ENCODE measurements at regions of chr11 and their contacts with region 1.

Region 1: GRCh38 chr11:36292311-36292722 is 3.1 kb upstream of the COMMD9 start:
- DNase-seq: no peak
- ATAC-seq: no peak

Region 2: DNA sequence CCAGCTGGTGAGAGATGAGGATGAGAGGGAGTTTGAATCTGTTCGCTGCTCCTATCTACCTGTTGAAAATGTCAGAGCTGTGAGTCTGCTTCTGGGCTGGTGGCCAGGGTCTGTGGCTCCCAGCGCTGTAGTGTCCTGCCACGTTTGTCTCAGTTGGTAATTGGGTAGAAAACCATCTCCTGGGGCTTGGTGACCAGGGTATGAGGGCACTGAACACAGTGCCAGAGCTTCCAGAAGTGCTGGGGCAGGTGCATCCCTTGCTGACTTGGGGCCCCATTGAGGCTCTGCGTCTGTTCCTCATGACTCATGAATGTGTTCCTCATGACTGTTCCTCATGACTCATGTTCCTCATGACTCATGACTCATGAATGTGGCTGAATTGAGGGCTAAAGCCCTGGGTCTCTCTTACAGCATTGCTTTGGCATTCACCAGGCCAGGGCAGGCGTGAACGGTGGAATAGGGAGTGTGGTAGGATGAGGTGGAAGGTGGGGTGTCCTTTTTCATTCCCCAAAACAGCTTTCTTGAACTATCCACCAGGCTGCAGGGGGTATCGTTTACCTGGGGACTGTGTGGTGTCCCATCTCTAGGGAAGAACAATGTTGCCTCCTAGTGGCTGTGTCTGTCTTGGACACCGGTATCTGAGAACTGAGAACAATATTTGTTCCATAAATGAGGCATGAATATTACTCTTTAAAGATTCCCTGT is 142.6 kb before region 1 on chr11:
- intact Hi-C with region 1: no loop called
- DNase-seq: no peak
- ATAC-seq: peak; percentile 62

Region 3: DNA sequence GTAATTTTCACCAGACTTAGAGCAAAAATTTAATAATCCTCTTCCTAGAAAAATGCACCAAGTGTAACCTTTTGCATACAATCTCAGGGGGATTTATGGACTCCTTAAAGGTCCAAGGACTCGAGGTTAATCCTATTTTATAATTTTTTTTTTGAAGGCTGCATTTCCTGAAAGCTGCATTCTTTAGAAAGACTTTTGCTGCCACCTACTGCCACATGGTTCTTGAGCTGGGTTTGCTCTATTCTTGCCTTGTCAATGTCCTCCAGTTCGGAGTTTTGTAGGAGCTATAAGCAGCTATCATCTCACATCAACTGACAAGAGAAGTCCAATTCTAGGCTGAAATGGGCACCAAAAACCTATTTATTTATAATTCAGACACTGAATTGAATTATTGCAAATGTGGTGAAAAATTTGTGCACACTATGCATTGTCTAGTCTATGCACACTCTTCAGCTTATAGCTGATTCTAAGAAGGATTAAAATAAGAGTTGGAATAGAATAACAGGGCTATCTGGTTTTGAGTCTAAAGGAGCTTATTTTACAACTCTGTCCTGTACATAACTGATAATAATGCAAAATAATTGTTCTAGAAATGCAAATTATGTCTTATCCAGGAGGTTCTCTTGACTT is 186.5 kb after region 1 on chr11:
- intact Hi-C with region 1: loop called (anchors 5 kb)
- DNase-seq: no peak
- ATAC-seq: peak; percentile 77

Region 4: GRCh38 chr11:36499315-36499714 is 207.0 kb after region 1 on chr11:
- intact Hi-C with region 1: loop called (anchors 5 kb)
- DNase-seq: no peak
- ATAC-seq: no peak

Measured in Right ventricle myocardium superior (tissue), 1 donor.